A549 (cell line): ENCODE measurements at regions of chr17 and their contacts with region 1.

Region 1: GRCh38 chr17:50501054-50501453 is 7.2 kb upstream of the MYCBPAP start:
- DNase-seq: peak in 1 of 2 experiments; percentile 54
- ATAC-seq: peak in 1 of 2 experiments; percentile 9; a peak in 1 of 6 replicates
- H3K4me3 ChIP-seq: no peak overlapping the region
- H3K27ac ChIP-seq: no peak overlapping the region
- H3K4me1 ChIP-seq: peaks cover 5% of the 10 kb centered on the region; the same call in 1 of the 3 replicates
- CTCF ChIP-seq: peak; percentile 64
- EP300 ChIP-seq: no peak
- POLR2A ChIP-seq: no peak
- RAD21 ChIP-seq: peak; percentile 32 to 35; a peak in 2 of 5 replicates

Region 2: GRCh38 chr17:50318501-50319285 is 182.4 kb before region 1 on chr17:
- CTCF ChIA-PET with region 1: no interaction called
- POLR2A ChIA-PET with region 1: no interaction called
- DNase-seq: no peak
- ATAC-seq: 0 out of 6 replicates have a peak, but pooled peaks of 1 of the 2 experiments have one; percentile 19
- H3K4me3 ChIP-seq: no peak overlapping the region
- H3K27ac ChIP-seq: no peak overlapping the region
- H3K4me1 ChIP-seq: no peaks in the 10 kb centered on the region
- CTCF ChIP-seq: no peak
- EP300 ChIP-seq: no peak
- POLR2A ChIP-seq: no peak
- RAD21 ChIP-seq: no peak

Region 3: GRCh38 chr17:50487213-50488096 is 13.6 kb before region 1 on chr17:
- CTCF ChIA-PET with region 1: interaction called, 119 read pairs
- POLR2A ChIA-PET with region 1: interaction called, 4 read pairs
- DNase-seq: no peak
- ATAC-seq: peak; percentile 14 to 16; a peak in 3 of 6 replicates
- H3K4me3 ChIP-seq: no peak overlapping the region
- H3K27ac ChIP-seq: no peak overlapping the region
- H3K4me1 ChIP-seq: peaks cover 13% of the 10 kb centered on the region
- CTCF ChIP-seq: no peak
- EP300 ChIP-seq: no peak
- POLR2A ChIP-seq: no peak
- RAD21 ChIP-seq: no peak

Region 4: GRCh38 chr17:50514946-50515702 is 14.1 kb after region 1 on chr17:
- CTCF ChIA-PET with region 1: interaction called, 28 read pairs
- POLR2A ChIA-PET with region 1: interaction called, 3 read pairs
- DNase-seq: no peak
- ATAC-seq: no peak
- H3K4me3 ChIP-seq: no peak overlapping the region
- H3K27ac ChIP-seq: 0 out of 6 replicates have a peak overlapping the region, but pooled peaks of 1 of the 2 experiments have one; percentile 19
- H3K4me1 ChIP-seq: peaks cover 12% of the 10 kb centered on the region; the same call in 1 of the 3 replicates
- CTCF ChIP-seq: no peak
- EP300 ChIP-seq: no peak
- POLR2A ChIP-seq: no peak
- RAD21 ChIP-seq: no peak

Region 5: GRCh38 chr17:50527155-50527762 is 26.2 kb after region 1 on chr17:
- CTCF ChIA-PET with region 1: interaction called, 12 read pairs
- POLR2A ChIA-PET with region 1: no interaction called
- DNase-seq: no peak
- ATAC-seq: no peak
- H3K4me3 ChIP-seq: no peak overlapping the region
- H3K27ac ChIP-seq: no peak overlapping the region
- H3K4me1 ChIP-seq: peaks cover 2% of the 10 kb centered on the region; the same call in 2 of the 3 replicates
- CTCF ChIP-seq: no peak
- EP300 ChIP-seq: no peak
- POLR2A ChIP-seq: no peak
- RAD21 ChIP-seq: no peak